ENCODE measurements at regions of chr11 and their contacts with region 1.

Region 1: DNA sequence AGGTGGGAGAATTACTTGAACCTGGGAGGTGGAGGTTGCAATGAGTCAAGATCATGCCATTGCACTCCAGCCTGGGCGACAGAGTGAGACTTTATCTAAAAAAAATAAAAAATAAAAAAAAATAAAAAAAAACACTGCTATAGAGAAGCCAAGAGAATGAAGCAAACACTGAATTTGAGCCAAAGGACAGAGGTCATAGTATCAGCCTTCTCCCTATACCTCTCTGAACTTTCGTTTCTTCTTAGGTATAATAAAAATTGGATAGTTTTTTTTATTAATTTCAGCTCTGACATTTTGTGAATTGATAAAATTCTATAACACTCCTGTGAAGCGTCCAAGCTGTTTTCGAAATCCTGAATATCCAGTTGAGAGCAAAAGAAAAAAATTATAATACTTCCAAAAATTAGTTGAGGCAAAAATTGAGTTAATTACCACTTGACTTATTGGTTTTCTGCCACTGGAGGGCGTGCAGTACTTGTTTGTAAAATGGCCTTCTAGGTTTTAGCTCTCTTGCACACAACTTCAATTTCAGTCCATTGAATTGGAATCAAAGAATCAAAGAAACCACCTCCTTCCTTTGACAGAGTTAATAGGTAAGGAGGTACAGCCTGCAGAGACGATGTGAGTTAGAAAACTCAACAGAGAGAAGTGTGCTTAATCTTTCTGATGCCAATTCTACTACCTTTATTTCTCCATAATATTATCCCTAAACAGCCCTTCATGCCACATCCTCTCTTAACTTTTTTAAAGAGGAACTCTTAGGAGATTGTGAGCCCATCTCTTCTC is 143.2 kb downstream of the BBOX1 start:
- DNase-seq: peak; percentile 47
- H3K4me3 ChIP-seq: no peak overlapping the region
- H3K27ac ChIP-seq: no peak overlapping the region
- H3K4me1 ChIP-seq: peaks cover 10% of the 10 kb centered on the region
- H3K27me3 ChIP-seq: no peaks in the 10 kb centered on the region
- CTCF ChIP-seq: peak; percentile 66 to 77

Region 2: DNA sequence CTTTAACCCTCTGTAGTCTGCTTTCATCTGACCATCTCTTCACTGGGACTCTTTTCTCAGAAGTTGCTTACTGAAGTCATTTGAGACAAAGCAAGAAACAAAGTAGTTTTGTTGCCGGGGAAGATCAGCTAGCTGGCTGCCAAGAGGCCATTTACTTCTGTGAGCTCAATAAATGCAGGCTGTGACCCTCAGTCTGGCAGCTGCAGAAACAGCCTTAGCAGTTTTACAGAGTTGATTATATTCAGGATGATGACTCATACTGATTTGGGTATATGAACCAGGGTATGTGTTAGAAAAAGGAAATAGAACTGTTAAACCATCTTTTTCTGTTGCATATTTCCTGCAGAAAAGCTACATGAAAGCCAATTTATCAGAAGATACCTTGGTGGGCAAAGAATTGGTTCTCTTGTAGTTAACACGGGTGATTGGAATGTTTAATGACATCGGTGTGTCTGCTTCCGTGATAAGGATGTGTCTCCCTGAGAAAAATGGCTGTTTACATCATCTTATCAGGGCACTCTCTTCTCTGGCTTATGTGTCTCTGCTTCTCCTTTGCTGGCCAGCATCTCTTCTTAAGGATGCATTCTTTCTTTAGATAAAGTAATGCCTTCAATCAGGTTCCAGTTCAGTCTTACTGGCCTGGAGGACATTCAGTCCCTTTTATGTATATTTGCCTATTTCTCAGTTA is 171.5 kb before region 1 on chr11:
- CTCF ChIA-PET with region 1: no interaction called
- dilution Hi-C with region 1: no loop called
- in situ Hi-C with region 1: no loop called
- intact Hi-C with region 1: no loop called
- DNase-seq: peak; percentile 27
- H3K4me3 ChIP-seq: no peak overlapping the region
- H3K27ac ChIP-seq: no peak overlapping the region
- H3K4me1 ChIP-seq: peaks cover 5% of the 10 kb centered on the region
- H3K27me3 ChIP-seq: no peaks in the 10 kb centered on the region
- CTCF ChIP-seq: no peak

Region 3: DNA sequence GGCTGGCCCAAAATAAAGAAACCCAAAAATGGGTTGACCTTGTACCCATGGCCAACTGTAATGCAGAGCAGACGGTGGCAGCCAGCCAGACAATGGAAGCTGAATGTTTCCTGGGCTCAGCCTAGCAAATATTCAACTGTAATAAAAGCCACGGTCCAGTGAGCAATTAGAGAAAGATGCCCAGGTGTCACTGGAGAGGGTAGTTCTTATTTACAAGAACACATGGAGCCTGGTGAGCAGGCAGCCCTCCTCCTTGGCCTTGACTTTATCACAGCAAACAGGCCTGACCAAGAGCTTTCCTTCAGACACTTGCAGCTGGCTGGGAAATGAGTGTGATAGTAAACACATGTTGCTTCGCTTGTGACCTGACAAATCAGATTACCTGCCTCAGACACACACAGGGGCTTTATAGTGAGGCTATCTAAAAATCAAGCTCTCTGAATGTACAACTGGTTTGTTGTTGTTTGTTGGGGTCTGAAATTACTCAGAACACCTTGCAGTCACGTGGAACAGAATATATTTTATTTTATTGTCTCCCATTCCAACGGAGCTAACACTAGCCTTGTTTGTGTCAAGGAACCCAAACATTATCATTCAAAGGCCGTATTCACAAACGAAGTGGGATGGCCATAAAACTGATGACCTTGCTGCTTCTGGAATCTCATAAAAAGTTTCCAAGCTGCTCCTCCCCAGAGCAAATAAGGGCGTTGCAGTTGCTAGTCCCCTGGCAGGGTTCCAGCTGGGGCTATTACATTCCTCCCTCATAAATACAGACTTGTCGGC is 17.8 kb after region 1 on chr11:
- CTCF ChIA-PET with region 1: no interaction called
- dilution Hi-C with region 1: no loop called
- in situ Hi-C with region 1: no loop called
- intact Hi-C with region 1: loop called (anchors 2 kb)
- DNase-seq: peak; percentile 60
- H3K4me3 ChIP-seq: no peak overlapping the region
- H3K27ac ChIP-seq: no peak overlapping the region
- H3K4me1 ChIP-seq: no peaks in the 10 kb centered on the region
- H3K27me3 ChIP-seq: no peaks in the 10 kb centered on the region
- CTCF ChIP-seq: no peak

Region 4: DNA sequence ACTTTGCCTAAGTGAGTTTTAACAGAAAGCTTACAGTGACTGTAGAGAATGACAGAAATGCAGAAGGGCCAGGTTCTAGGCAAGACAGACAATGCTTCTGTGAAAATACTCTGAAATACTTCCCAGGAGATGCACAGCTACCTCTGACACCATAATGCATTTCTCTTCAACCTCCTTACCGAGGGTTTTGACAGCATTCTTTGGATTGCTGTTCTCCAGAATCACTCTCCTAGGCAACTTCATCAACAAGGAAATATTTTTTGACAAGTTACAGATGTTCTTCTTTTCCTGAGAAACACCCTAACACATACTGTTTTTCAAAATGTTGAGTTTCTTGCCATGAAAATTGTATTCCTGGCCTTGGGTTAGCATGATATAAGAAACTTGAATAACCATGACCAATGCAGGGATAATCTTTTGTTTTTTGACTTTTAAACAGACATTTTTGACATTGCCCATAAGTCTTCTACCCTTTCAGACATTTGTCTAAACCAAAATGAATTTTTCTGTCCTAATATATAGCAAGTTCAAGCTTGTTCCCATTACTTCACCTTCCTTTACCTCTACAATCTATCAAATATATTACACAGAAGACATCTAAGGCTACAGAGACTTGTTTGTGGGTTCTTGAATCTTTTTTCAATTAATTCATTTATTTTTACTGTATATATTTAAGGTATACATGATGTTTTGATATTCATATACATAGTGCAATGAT is 71.0 kb after region 1 on chr11:
- CTCF ChIA-PET with region 1: no interaction called
- dilution Hi-C with region 1: no loop called
- in situ Hi-C with region 1: no loop called
- intact Hi-C with region 1: no loop called
- DNase-seq: peak; percentile 18
- H3K4me3 ChIP-seq: no peak overlapping the region
- H3K27ac ChIP-seq: no peak overlapping the region
- H3K4me1 ChIP-seq: peaks cover 6% of the 10 kb centered on the region
- H3K27me3 ChIP-seq: no peaks in the 10 kb centered on the region
- CTCF ChIP-seq: no peak

Region 5: DNA sequence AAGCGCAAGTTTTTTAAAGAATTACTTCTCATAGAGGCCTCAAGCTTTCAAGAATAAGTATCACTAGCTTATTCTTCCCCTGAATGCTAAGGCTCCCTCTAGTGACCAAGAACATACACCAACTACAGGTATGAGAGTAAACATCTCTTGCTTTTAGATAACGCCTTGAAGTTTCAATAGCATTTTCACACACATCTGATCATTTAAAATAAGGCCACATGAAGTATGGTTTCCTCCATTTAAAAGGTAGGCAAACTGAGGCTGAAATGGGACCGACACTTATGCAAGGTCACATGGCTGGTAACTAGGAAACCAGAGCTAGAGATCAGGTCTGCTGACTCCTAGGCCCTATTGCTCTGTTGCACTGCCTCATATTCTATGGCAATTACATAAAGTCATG is 112.6 kb after region 1 on chr11:
- CTCF ChIA-PET with region 1: interaction called, 14 read pairs
- dilution Hi-C with region 1: no loop called
- in situ Hi-C with region 1: loop called in 1 of 2 experiments (anchors 10 kb)
- intact Hi-C with region 1: loop called (anchors 1 kb)
- DNase-seq: peak; percentile 45
- H3K4me3 ChIP-seq: no peak overlapping the region
- H3K27ac ChIP-seq: no peak overlapping the region
- H3K4me1 ChIP-seq: peaks cover 10% of the 10 kb centered on the region
- H3K27me3 ChIP-seq: no peaks in the 10 kb centered on the region
- CTCF ChIP-seq: peak; percentile 74 to 80

Region 6: GRCh38 chr11:27362749-27363575 is 179.1 kb after region 1 on chr11 and contains the start of gene CCDC34:
- CTCF ChIA-PET with region 1: no interaction called
- dilution Hi-C with region 1: no loop called
- in situ Hi-C with region 1: no loop called
- intact Hi-C with region 1: loop called (anchors 1 kb)
- DNase-seq: peak; percentile 92
- H3K4me3 ChIP-seq: peak within 1 kb of the TSS; percentile 63 to 87 (median 83)
- H3K27ac ChIP-seq: peak within 1 kb of the TSS; percentile 78
- H3K4me1 ChIP-seq: peaks cover 17% of the 10 kb centered on the region
- H3K27me3 ChIP-seq: no peaks in the 10 kb centered on the region
- CTCF ChIP-seq: no peak
- total RNA-seq, gene CCDC34: 2.5 to 10.4 TPM

Region 7: DNA sequence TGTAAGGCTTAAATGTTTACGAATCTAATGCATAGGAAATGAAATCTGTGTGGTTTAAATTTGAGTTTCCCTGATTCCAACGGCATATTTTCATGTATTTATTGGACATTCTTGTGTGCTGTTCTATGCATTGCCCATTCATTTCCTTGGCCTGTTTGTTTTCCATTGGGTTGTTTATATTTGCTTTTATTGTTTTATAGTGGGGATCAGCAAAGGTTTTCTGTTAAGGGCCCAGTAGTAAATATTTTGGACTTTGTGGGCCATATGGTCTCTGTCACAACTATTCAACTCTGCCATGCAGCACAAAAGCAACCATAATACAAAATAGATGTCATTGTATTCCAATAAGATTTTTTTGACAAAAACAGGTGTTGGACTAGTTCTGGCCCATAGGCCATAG is 294.0 kb after region 1 on chr11:
- CTCF ChIA-PET with region 1: interaction called, 6 read pairs
- dilution Hi-C with region 1: loop called (anchors 25 kb)
- in situ Hi-C with region 1: loop called in 1 of 2 experiments (anchors 5 kb)
- intact Hi-C with region 1: no loop called
- DNase-seq: no peak
- H3K4me3 ChIP-seq: no peak overlapping the region
- H3K27ac ChIP-seq: no peak overlapping the region
- H3K4me1 ChIP-seq: peaks cover 6% of the 10 kb centered on the region
- H3K27me3 ChIP-seq: no peaks in the 10 kb centered on the region
- CTCF ChIP-seq: no peak

Region 8: DNA sequence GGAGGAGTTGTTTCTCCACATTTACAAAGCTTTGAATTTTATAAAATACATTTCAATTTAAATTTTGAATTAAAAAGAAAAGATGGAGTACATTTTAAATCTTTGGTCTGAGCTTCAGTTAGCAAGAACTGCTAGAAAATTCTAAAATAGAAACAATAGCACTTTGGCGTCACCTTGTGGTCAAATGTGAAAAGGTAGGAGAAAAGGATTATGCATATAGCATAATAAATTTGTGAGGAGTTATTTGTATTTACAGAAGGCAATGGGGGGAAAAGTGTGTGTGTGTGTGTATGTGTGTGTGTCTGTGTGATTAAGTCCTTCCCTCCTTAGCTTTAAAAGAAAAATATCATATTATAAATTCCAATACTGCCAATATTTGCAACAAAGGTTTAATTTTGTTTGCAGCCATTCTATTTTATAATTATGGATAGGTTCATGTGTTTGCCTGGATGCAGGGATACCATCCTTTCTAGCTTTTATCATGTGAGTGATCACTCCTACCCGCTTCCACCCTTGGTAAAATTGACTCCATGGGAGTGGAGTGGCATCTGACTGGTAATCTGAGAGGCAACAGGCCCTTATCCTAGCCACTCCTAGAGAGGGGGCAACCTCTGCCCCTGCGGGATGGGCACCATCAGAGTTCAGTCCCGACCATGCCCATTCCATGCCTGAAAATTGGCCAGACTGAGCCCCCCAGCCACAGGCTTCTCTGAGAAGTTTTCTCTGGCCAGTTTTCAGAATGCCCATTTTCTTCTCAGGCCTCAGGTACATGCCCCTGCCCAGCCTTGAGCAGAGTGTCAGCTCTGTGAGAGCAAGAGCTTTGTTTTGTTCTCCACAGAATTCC is 302.3 kb after region 1 on chr11:
- CTCF ChIA-PET with region 1: interaction called, 13 read pairs
- dilution Hi-C with region 1: loop called (anchors 25 kb)
- in situ Hi-C with region 1: loop called in 1 of 2 experiments (anchors 10 kb)
- intact Hi-C with region 1: loop called (anchors 1 kb)
- DNase-seq: peak; percentile 42
- H3K4me3 ChIP-seq: no peak overlapping the region
- H3K27ac ChIP-seq: no peak overlapping the region
- H3K4me1 ChIP-seq: no peaks in the 10 kb centered on the region
- H3K27me3 ChIP-seq: no peaks in the 10 kb centered on the region
- CTCF ChIP-seq: peak; percentile 92 to 94

Region 9: GRCh38 chr11:27497284-27497866 is 313.5 kb after region 1 on chr11:
- CTCF ChIA-PET with region 1: interaction called, 3 read pairs
- dilution Hi-C with region 1: loop called (anchors 25 kb)
- in situ Hi-C with region 1: loop called in 1 of 2 experiments (anchors 10 kb)
- intact Hi-C with region 1: loop called (anchors 1 kb)
- DNase-seq: peak; percentile 13
- H3K4me3 ChIP-seq: no peak overlapping the region
- H3K27ac ChIP-seq: no peak overlapping the region
- H3K4me1 ChIP-seq: no peaks in the 10 kb centered on the region
- H3K27me3 ChIP-seq: no peaks in the 10 kb centered on the region
- CTCF ChIP-seq: peak; percentile 29 to 44